ENCODE measurements at regions of chr22 and their contacts with region 1.

Region 1: DNA sequence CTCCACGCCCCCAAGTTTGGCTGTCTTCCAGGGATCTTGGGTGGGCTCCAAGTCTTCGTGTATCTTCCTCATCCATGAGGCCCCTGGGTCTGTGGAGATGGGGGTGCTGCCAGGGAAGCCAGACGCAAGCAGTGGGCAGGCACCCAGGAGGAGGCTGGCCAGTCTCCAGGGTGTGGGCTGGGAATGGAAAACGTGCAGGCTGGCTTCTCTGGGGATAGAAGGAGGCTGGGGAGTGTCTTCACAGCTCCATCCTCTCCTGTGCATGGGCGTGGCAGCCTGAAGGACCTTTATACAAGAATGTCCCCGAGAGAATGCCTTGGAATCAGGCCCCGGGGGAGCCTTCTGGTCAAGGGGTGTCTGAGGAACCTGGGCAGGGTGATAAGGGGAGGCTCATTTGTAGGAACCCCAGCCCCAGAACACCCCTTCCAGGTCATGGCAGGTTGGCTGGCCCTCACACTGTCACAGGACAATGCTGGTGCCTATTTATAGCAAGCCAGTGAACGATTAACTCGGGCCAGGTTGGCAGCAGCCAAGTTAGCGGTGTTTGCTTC is 14.0 kb downstream of the SGSM1 start:
- DNase-seq: peak; percentile 81

Region 2: GRCh38 chr22:23800297-23801237 is 1019.4 kb before region 1 on chr22:
- intact Hi-C with region 1: loop called in 1 of 2 experiments (anchors 5 kb)
- DNase-seq: no peak

Region 3: DNA sequence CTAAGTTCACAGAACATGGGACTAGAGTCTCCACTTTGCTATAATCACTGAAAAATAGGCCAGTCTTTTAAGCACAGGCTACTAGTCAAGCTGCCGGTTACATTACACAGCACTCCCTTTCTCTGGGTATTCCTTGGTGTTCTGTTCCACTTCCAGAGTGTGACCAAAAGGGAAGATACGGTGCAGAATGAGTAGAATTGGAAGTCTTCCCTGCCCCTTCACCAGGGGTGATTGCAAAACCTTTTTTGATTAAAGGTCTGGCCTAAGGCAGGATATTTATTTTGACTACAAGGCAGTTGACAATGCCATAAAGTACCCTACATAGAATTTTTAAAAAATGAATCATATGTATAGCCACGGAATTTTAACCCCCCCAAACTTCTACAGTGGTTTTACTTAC is 452.1 kb before region 1 on chr22:
- intact Hi-C with region 1: no loop called
- DNase-seq: no peak